ENCODE measurements at regions of chr12 and their contacts with region 1.

Region 1: GRCh38 chr12:7113389-7113871 is 4.4 kb upstream of the C1RL start:
- DNase-seq: peak in 3 of 10 donors; percentile 27 to 73 (median 49)

Region 2: GRCh38 chr12:6944381-6945186 is 168.8 kb before region 1 on chr12:
- intact Hi-C with region 1: loop called (anchors 10 kb)
- DNase-seq: peak; percentile 87 to 99 (median 93)